PC-3 (cell line): ENCODE measurements at regions of chr14 and their contacts with region 1.

Region 1: DNA sequence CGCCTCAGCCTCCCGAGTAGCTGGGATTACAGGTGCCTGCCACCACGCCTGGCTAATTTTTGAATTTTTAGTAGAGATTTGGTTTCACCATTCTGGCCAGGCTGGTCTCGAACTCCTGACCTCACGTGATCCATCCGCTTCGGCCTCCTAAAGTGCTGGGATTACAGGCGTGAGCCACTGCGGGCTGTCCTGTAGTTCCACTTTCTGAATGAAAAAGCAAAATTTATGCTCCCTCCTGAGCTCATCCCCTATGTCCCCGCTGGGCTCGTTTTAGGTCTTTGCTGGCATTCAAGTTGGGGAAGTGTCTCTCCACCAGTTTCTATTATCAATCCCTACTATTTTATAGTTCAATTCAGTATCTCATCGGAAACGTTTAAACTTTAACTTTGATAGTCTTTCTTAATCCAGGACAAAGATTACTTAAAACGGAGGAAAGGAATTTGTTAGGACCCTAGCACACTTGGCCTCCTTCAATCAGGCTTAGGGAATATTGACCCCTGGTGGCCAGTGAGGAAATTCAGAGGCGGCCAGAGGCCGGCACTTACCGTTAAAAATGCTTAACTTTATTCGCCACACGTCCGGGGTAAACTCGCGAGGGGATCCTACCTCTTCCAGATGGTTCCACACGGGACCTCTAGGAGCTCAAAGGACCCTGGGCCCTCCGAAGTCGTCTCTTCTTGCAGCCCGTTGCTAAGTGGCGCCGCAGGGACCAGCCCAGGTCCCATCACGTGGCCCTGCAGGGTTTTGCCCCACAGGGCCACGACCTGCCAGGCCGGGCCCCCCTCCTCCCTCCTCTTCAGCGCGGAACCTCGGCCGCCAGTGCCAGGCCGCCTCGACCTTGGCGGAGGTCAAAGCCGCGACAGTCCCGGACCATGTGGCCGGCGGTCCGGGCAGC is 11.4 kb upstream of the DNAL1 start:
- DNase-seq: peak; percentile 81
- ATAC-seq: peak; percentile 80
- H3K4me3 ChIP-seq: peak overlapping the region; percentile 64
- H3K27ac ChIP-seq: no peak overlapping the region
- H3K4me1 ChIP-seq: peaks cover 8% of the 10 kb centered on the region; the same call in 1 of the 2 replicates
- H3K27me3 ChIP-seq: no peaks in the 10 kb centered on the region
- CTCF ChIP-seq: peak; percentile 94

Region 2: DNA sequence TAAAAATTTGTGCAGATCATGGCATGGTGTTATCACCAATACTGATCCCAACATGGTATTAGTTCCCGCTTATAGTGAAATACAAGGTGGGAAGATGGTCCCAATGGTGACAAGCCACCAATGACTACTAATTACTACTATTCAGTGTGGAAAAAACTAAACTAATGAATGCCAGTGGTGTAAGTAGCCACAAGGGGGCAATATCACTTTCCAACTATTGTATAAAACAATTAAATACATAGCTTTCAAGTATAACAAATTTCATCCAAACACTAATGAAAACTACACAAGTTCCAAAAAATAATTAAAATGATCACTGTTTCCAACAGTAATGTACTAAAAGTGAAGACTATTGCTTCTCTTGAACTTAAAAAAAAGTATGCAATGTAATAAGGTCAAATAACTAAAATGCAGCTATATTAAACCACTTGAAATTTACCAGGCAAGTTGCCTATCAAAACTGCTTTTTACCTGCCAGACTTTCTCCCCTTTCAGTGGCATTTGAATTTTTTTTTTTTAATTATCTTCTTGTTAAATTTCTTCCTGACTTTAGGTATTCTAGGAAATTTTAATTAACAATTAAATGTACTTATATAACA is 338.1 kb before region 1 on chr14:
- CTCF ChIA-PET with region 1: interaction called, 4 read pairs
- POLR2A ChIA-PET with region 1: no interaction called
- intact Hi-C with region 1: loop called (anchors 10 kb)
- DNase-seq: peak; percentile 78
- ATAC-seq: peak; percentile 36
- H3K4me3 ChIP-seq: no peak overlapping the region
- H3K27ac ChIP-seq: no peak overlapping the region
- H3K4me1 ChIP-seq: peaks cover 7% of the 10 kb centered on the region
- H3K27me3 ChIP-seq: no peaks in the 10 kb centered on the region
- CTCF ChIP-seq: peak; percentile 98

Region 3: DNA sequence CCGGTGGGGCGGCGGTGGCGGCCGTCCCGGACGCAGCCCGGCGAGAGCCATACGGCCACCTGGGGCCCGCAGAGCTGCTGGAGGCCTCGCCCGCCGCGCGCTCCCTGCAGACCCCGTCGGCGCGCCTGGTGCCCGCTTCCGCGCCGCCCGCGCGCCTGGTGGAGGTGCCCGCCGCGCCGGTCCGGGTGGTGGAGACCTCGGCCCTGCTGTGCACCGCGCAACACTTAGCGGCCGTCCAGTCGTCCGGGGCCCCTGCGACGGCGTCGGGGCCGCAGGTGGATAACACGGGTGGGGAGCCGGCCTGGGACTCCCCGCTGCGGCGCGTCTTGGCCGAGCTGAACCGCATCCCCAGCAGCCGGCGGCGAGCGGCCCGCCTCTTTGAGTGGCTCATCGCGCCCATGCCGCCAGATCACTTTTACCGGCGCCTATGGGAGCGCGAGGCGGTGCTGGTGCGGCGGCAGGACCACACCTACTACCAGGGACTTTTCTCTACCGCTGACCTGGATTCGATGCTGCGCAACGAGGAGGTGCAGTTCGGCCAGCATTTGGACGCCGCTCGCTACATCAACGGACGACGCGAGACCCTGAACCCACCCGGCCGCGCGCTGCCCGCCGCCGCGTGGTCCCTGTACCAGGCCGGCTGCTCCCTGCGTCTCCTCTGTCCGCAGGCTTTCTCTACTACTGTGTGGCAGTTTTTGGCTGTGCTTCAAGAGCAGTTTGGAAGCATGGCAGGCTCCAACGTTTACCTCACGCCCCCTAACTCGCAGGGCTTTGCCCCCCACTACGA is 141.9 kb before region 1 on chr14:
- CTCF ChIA-PET with region 1: no interaction called
- POLR2A ChIA-PET with region 1: no interaction called
- intact Hi-C with region 1: loop called (anchors 5 kb)
- DNase-seq: peak; percentile 74
- ATAC-seq: peak; percentile 81
- H3K4me3 ChIP-seq: peak overlapping the region; percentile 79
- H3K27ac ChIP-seq: peak overlapping the region; percentile 27; the same call in 1 of the 2 replicates
- H3K4me1 ChIP-seq: peaks cover 26% of the 10 kb centered on the region
- H3K27me3 ChIP-seq: no peaks in the 10 kb centered on the region
- CTCF ChIP-seq: no peak

Region 4: DNA sequence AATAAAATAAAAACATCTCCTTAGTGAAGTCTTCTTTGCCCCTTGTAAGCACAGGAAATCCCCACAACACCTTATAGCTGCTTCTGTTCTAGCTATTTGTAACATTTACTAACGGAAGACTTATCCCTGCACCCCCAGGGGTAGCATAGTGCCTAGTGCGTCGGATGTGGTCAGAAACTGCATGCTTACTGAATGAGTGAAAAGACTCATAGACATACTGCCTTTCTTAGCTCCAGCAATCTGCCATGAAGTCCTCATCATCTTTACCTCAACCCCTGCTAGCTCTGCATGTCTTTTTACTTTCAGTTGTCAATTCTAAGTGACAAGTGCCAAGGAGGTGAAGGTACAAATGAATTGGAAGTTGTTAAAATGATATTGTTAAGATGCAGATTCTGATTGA is 129.7 kb before region 1 on chr14:
- CTCF ChIA-PET with region 1: interaction called, 7 read pairs
- POLR2A ChIA-PET with region 1: no interaction called
- intact Hi-C with region 1: loop called (anchors 1 kb)
- DNase-seq: no peak
- ATAC-seq: no peak
- H3K4me3 ChIP-seq: no peak overlapping the region
- H3K27ac ChIP-seq: no peak overlapping the region
- H3K4me1 ChIP-seq: no peaks in the 10 kb centered on the region
- H3K27me3 ChIP-seq: no peaks in the 10 kb centered on the region
- CTCF ChIP-seq: no peak

Region 5: GRCh38 chr14:73713803-73714655 is 80.7 kb after region 1 on chr14 and contains the start of gene PNMA1:
- CTCF ChIA-PET with region 1: no interaction called
- POLR2A ChIA-PET with region 1: no interaction called
- intact Hi-C with region 1: loop called (anchors 5 kb)
- DNase-seq: peak; percentile 85
- ATAC-seq: peak; percentile 71
- H3K4me3 ChIP-seq: peak within 1 kb of the TSS; percentile 99
- H3K27ac ChIP-seq: peak within 1 kb of the TSS; percentile 78
- H3K4me1 ChIP-seq: peaks cover 14% of the 10 kb centered on the region
- H3K27me3 ChIP-seq: no peaks in the 10 kb centered on the region
- CTCF ChIP-seq: no peak
- total RNA-seq, gene PNMA1: 30.8 and 36.7 TPM in 2 replicates